ENCODE measurements at regions of chr17 and their contacts with region 1.

Region 1: GRCh38 chr17:65219124-65219523 is 82.0 kb downstream of the RGS9 start:
- DNase-seq: no peak
- H3K4me3 ChIP-seq: no peak overlapping the region
- H3K27ac ChIP-seq: no peak overlapping the region
- H3K4me1 ChIP-seq: no peaks in the 10 kb centered on the region
- H3K27me3 ChIP-seq: peaks cover 37 to 41% of the 10 kb centered on the region in 2 experiments
- CTCF ChIP-seq: peak in 1 of 2 donors; percentile 21
- POLR2A ChIP-seq: no peak

Region 2: DNA sequence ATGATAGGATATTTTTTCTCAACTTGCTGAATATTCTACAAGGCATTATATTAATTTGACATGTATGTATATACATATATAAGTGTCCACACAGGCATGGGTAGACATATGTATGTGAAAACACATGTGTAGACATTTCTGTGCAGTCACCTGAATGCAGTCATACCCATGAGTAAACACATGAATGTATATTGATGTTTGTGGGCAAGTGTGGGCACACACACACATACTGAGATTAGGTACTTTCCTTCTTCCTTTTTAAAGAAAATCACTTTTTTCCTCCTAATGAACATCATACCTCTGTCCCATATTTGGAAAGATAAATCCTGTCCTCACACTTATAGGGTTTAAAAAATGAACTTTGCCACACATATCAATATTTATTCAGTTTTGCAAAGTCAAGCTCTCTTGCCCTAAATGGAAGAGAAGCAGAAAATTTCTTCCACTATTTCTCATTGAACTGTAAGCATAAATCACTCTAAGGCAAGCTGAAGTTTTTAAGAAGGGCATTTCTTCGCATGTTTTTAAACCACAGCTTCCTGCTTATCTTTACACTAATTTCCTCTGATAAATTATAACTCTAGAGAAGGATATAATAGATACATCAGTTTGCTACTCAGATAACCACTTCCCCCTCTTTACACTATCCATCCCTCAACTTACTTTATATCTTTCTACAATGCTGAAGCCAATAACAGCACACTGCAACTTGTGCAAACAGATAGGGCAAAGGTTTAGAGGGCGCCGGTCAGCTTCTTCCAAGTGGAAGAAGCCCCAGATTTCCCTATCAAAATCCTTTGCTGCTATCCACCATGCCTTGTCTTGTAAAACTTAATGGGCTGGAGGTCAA is 250.2 kb before region 1 on chr17:
- CTCF ChIA-PET with region 1: no interaction called
- POLR2A ChIA-PET with region 1: no interaction called
- dilution Hi-C with region 1: no loop called
- intact Hi-C with region 1: no loop called
- DNase-seq: no peak
- H3K4me3 ChIP-seq: no peak overlapping the region
- H3K27ac ChIP-seq: no peak overlapping the region
- H3K4me1 ChIP-seq: peaks cover 7% of the 10 kb centered on the region
- H3K27me3 ChIP-seq: no peaks in the 10 kb centered on the region
- CTCF ChIP-seq: no peak
- POLR2A ChIP-seq: no peak

Region 3: DNA sequence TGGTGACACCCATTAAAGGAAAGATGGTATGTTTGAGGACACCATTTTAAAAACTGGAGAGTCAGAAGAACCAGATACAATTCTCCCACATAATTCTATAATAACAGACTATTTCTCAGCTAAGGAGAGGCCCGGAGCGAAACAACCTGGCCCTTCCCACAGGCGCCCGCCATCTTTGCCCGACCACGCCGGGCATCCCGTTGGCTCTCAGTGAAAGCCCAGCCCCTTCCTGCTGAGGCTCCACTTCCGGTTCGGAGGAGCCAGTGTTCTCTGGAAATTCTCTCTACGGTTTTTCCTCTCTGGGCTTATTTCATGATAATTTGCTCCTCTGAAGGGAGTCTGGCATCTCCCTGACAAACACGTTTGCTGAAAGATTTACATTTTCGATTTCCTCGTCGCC is 166.6 kb after region 1 on chr17:
- CTCF ChIA-PET with region 1: no interaction called
- POLR2A ChIA-PET with region 1: no interaction called
- dilution Hi-C with region 1: no loop called
- intact Hi-C with region 1: no loop called
- DNase-seq: no peak
- H3K4me3 ChIP-seq: no peak overlapping the region
- H3K27ac ChIP-seq: no peak overlapping the region
- H3K4me1 ChIP-seq: no peaks in the 10 kb centered on the region
- H3K27me3 ChIP-seq: no peaks in the 10 kb centered on the region
- CTCF ChIP-seq: no peak
- POLR2A ChIP-seq: no peak

Region 4: GRCh38 chr17:66165513-66166123 is 946.5 kb after region 1 on chr17:
- CTCF ChIA-PET with region 1: interaction called, 21 read pairs
- POLR2A ChIA-PET with region 1: no interaction called
- dilution Hi-C with region 1: no loop called
- intact Hi-C with region 1: no loop called
- DNase-seq: peak; percentile 72
- H3K4me3 ChIP-seq: no peak overlapping the region
- H3K27ac ChIP-seq: no peak overlapping the region
- H3K4me1 ChIP-seq: no peaks in the 10 kb centered on the region
- H3K27me3 ChIP-seq: no peaks in the 10 kb centered on the region
- CTCF ChIP-seq: peak; percentile 33 to 45
- POLR2A ChIP-seq: no peak

Measured in endothelial cell of umbilical vein (primary cell).